ENCODE measurements at regions of chr5 and their contacts with region 1.

Region 1: GRCh38 chr5:52948418-52949076 is 40.6 kb upstream of the ITGA2 start:
- DNase-seq: peak; percentile 52 to 81
- ATAC-seq: peak; percentile 96 to 98
- H3K4me3 ChIP-seq: no peak overlapping the region
- H3K27ac ChIP-seq: peak overlapping the region in 1 of 2 experiments; percentile 55; a peak in 1 of 6 replicates
- H3K4me1 ChIP-seq: peaks cover 13% of the 10 kb centered on the region; the same call in 2 of the 3 replicates
- CTCF ChIP-seq: peak; percentile 88
- EP300 ChIP-seq: no peak
- POLR2A ChIP-seq: no peak
- RAD21 ChIP-seq: peak; percentile 97

Region 2: DNA sequence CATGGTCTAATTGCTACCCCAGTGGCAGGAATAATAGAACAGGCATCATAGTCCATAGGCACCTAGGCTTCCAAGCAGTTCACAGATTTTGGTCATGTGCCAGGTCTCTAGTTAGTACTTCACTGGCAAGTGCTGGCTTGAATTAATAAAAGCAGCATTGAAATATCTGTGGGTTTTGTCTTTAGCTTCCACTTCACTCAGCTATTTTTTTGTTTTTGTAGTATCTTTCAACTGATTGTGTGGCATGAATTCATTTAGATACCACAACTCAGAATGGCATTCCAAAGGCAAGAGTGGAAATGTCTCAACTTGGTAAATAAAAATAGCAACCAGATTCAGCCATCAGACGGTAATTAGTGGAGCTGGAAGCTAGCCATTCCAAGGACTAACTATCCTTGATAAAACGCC is 12.7 kb after region 1 on chr5:
- CTCF ChIA-PET with region 1: interaction called, 35 read pairs
- POLR2A ChIA-PET with region 1: no interaction called
- DNase-seq: no peak
- ATAC-seq: no peak
- H3K4me3 ChIP-seq: no peak overlapping the region
- H3K27ac ChIP-seq: no peak overlapping the region
- H3K4me1 ChIP-seq: peaks cover 6% of the 10 kb centered on the region
- CTCF ChIP-seq: no peak
- EP300 ChIP-seq: no peak
- POLR2A ChIP-seq: no peak
- RAD21 ChIP-seq: no peak

Region 3: GRCh38 chr5:52989781-52990527 is 41.4 kb after region 1 on chr5:
- CTCF ChIA-PET with region 1: interaction called, 61 read pairs
- POLR2A ChIA-PET with region 1: interaction called, 8 read pairs
- DNase-seq: peak in 1 of 2 experiments; percentile 31
- ATAC-seq: peak; percentile 75 to 76
- H3K4me3 ChIP-seq: peak overlapping the region; percentile 75
- H3K27ac ChIP-seq: peak overlapping the region; percentile 82 to 94
- H3K4me1 ChIP-seq: peaks cover 29% of the 10 kb centered on the region
- CTCF ChIP-seq: peak; percentile 45
- EP300 ChIP-seq: no peak
- POLR2A ChIP-seq: no peak
- RAD21 ChIP-seq: peak; percentile 41 to 57

Region 4: DNA sequence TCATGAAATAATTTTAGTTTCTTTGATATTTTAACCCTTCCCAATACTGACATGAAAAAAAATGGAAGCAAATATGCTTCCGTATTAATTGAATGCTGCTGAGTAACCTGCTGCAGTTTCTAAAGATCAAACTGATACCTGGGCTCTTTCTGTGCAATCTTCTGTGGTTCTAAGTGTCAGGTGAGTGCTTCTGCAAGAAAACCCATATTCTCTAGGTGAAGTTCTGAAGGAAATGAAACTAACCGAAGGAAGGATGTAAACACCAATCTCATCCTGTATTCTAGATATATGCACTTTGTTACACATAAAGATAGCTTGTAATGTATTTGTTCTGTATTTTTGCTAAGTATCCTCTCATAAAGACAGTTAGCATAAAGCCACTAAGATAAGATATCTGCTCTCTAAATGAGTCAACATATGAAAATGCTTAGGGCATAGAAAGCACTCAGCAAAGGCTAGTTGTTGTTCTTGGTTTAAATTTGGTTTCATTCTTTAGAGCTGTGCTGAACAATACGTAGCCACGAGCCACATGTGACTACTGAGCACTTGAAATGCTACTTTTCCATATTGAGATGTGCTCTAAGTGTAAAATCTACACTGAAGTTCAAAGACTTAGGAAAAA is 92.6 kb after region 1 on chr5:
- CTCF ChIA-PET with region 1: interaction called, 27 read pairs
- POLR2A ChIA-PET with region 1: no interaction called
- DNase-seq: no peak
- ATAC-seq: no peak
- H3K4me3 ChIP-seq: no peak overlapping the region
- H3K27ac ChIP-seq: no peak overlapping the region
- H3K4me1 ChIP-seq: peaks cover 27% of the 10 kb centered on the region
- CTCF ChIP-seq: no peak
- EP300 ChIP-seq: no peak
- POLR2A ChIP-seq: no peak
- RAD21 ChIP-seq: no peak

Region 5: DNA sequence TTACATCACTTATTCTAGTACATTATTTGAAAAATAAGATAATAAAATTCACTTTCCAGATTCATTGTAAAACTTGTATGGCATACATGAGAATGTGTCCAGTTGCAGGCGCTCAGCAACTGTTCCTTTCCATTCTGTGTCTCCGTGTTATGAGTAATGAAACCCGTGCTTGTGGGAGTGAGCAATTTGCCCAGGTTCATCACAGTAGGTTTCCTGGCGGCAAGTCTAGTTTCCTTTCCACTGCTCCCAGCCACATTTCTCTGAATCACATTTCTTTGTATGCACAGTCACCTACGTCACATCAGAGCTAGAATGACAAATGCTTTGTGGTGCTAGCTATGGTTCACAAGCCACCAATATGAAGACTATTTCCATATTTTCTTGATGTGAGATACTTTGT is 121.1 kb after region 1 on chr5:
- CTCF ChIA-PET with region 1: interaction called, 16 read pairs
- POLR2A ChIA-PET with region 1: no interaction called
- DNase-seq: no peak
- ATAC-seq: no peak
- H3K4me3 ChIP-seq: no peak overlapping the region
- H3K27ac ChIP-seq: no peak overlapping the region
- H3K4me1 ChIP-seq: no peaks in the 10 kb centered on the region
- CTCF ChIP-seq: no peak
- EP300 ChIP-seq: no peak
- POLR2A ChIP-seq: no peak
- RAD21 ChIP-seq: no peak

Region 6: GRCh38 chr5:53105611-53106300 is 157.2 kb after region 1 on chr5:
- CTCF ChIA-PET with region 1: interaction called, 27 read pairs
- POLR2A ChIA-PET with region 1: no interaction called
- DNase-seq: no peak
- ATAC-seq: no peak
- H3K4me3 ChIP-seq: no peak overlapping the region
- H3K27ac ChIP-seq: no peak overlapping the region
- H3K4me1 ChIP-seq: peaks cover 12% of the 10 kb centered on the region; the same call in 2 of the 3 replicates
- CTCF ChIP-seq: no peak
- EP300 ChIP-seq: no peak
- POLR2A ChIP-seq: no peak
- RAD21 ChIP-seq: no peak